Panc1 (cell line): ENCODE measurements at regions of chr6 and their contacts with region 1.

Region 1: DNA sequence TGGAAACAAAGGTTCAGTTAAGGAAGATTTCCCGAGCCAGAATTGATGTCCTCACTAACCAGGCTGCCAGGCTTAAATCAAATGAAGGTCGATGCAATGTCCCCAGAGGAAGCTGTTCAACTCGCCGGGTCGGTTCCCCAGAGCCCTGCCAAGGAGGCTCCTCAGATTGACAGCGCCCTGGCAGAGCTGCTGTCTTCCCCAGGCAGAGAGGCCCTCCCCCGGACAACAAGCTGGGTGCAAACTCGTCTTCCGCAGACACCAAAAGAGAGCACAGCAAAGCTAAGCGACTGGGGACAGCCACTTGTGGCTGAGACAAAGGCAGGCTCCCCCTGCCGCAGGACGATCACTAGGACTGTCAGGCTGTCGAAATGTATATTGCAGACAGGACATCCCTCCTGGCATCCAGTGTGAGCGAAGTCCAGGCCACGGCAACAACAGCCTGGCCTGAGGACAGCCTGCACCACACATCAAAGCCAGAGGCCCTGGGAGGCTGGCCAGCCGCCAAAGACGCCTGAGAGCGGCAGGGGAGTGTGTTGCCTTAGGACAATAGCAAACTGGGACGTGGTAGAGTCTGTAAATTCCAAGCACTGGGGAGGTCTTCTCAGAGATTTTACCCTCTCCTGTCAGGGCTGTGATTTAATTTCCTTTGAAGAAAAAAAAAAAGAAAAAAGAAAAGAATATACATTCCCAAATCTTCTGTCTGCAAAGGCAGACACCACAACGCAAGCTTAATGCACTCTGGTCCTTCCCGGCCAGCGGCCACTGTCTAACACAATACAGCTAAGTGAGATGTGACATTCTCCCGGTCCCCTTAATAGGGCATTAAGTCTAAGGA is 99.1 kb downstream of the HIVEP2 start:
- DNase-seq: no peak
- ATAC-seq: peak; percentile 74
- H3K4me3 ChIP-seq: peak overlapping the region; percentile 35 to 53
- H3K27ac ChIP-seq: peak overlapping the region; percentile 91
- H3K4me1 ChIP-seq: peaks cover 53% of the 10 kb centered on the region
- H3K27me3 ChIP-seq: no peaks in the 10 kb centered on the region
- CTCF ChIP-seq: no peak

Region 2: DNA sequence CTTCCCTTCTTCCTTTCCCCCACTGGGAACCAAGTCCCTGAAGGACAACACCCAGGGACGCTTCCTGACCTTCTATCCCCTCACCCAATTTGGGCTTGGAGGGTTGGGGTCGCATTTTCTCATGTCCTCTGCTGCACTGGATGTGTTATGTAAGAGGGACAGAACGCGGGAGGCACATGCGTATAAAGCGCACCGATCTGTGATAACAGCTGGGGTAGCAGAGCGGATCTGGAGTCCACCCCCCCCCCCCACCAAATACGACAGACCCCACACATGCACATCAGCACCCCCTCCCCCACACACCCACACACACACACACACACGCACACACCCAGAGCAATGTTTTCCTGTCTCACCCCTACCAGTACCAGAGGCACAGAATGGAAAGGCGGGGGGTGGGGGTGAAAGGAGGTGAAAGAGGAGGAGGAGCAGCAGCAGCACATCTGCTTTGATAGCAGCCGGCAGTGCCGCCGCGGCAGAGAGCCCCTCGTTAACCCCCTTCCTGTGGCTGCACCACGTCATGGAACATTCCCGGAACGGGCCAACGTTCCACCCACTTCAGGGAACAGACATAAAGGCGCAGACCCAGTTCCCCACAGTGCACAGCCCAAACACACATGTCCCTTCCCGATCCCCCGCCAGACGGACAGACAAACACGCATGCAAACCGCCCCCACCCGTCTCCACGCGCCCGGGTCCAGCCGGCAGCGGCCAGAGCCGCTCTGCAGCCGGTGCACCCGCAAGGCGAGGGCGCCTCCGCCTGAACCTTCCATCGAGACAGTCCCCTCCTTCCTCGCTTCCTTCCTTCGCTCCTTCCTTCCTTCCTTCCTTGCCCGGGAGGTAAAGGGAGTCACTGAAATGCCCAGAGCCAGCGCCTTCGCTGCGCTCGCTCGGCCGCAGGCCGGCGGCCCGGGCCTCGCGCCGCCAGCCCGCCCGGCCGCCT is 98.6 kb after region 1 on chr6:
- CTCF ChIA-PET with region 1: no interaction called
- POLR2A ChIA-PET with region 1: no interaction called
- in situ Hi-C with region 1: no loop called
- intact Hi-C with region 1: loop called (anchors 5 kb)
- DNase-seq: no peak
- ATAC-seq: peak; percentile 37
- H3K4me3 ChIP-seq: peak overlapping the region; percentile 75 to 86
- H3K27ac ChIP-seq: peak overlapping the region; percentile 82
- H3K4me1 ChIP-seq: peaks cover 27% of the 10 kb centered on the region
- H3K27me3 ChIP-seq: no peaks in the 10 kb centered on the region
- CTCF ChIP-seq: no peak

Region 3: GRCh38 chr6:143515061-143515760 is 669.4 kb after region 1 on chr6:
- CTCF ChIA-PET with region 1: no interaction called
- POLR2A ChIA-PET with region 1: no interaction called
- in situ Hi-C with region 1: no loop called
- intact Hi-C with region 1: no loop called
- DNase-seq: no peak
- ATAC-seq: no peak
- H3K4me3 ChIP-seq: no peak overlapping the region
- H3K27ac ChIP-seq: no peak overlapping the region
- H3K4me1 ChIP-seq: peaks cover 5% of the 10 kb centered on the region; the same call in 1 of the 2 replicates
- H3K27me3 ChIP-seq: 0 out of 2 replicates have a peak, but pooled peaks cover 2% of the 10 kb centered on the region
- CTCF ChIP-seq: no peak